Activated T-helper 2 cell treated with anti-CD3 and anti-CD28 coated beads, Interferon-gamma antibody, Interleukin-2, Interleukin-4, amounts not matched to agents 10 μg/mL and 5 μg/mL and 100 μg/mL, durations not matched to agents 14 hours and 24 hours and 36 hours (primary cell): ENCODE measurements at regions of chr5 and their contacts with region 1.

Region 1: GRCh38 chr5:111757355-111758283 is 625 bp upstream of the NREP start:
- DNase-seq: peak; percentile 86
- H3K4me3 Mint-ChIP-seq: peak overlapping the region; percentile 86
- H3K27ac Mint-ChIP-seq: peak overlapping the region; percentile 92
- H3K4me1 Mint-ChIP-seq: peaks cover 31% of the 10 kb centered on the region
- H3K27me3 Mint-ChIP-seq: no peaks in the 10 kb centered on the region

Region 2: GRCh38 chr5:110738812-110739651 is 1018.6 kb before region 1 on chr5 and contains the start of gene SLC25A46:
- intact Hi-C with region 1: loop called (anchors 10 kb)
- DNase-seq: peak; percentile 86
- H3K4me3 Mint-ChIP-seq: peak within 1 kb of the TSS; percentile 97
- H3K27ac Mint-ChIP-seq: peak within 1 kb of the TSS; percentile 92
- H3K4me1 Mint-ChIP-seq: peaks cover 28% of the 10 kb centered on the region
- H3K27me3 Mint-ChIP-seq: peaks cover 11% of the 10 kb centered on the region
- total RNA-seq, gene SLC25A46: 44.0 and 44.8 TPM in 2 replicates

Region 3: GRCh38 chr5:111530298-111530740 is 227.3 kb before region 1 on chr5:
- intact Hi-C with region 1: loop called (anchors 5 kb)
- DNase-seq: peak; percentile 80
- H3K4me3 Mint-ChIP-seq: peak overlapping the region; percentile 46
- H3K27ac Mint-ChIP-seq: peak overlapping the region; percentile 87
- H3K4me1 Mint-ChIP-seq: peaks cover 35% of the 10 kb centered on the region
- H3K27me3 Mint-ChIP-seq: no peaks in the 10 kb centered on the region

Region 4: DNA sequence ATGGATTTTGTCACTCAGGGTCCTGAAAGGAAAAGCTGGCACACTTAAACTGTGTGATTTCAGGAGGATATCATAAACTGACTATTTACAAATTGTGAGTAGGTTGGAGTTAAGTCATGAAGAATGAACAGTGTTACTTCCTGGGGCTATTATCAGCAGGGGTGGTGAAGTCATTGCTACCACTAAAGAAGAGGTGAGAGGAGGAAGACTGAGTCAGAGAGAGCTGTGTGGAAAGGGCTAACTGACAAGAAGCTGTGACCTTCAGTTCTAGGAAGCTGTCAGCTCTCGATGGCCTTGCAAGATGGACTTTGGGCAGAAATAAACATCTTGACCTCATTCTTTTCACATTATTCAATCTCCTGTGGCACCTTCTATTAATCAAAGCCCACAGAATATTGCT is 173.0 kb before region 1 on chr5:
- intact Hi-C with region 1: loop called (anchors 5 kb)
- DNase-seq: no peak
- H3K4me3 Mint-ChIP-seq: no peak overlapping the region
- H3K27ac Mint-ChIP-seq: peak overlapping the region; percentile 77
- H3K4me1 Mint-ChIP-seq: peaks cover 50% of the 10 kb centered on the region
- H3K27me3 Mint-ChIP-seq: no peaks in the 10 kb centered on the region

Region 5: DNA sequence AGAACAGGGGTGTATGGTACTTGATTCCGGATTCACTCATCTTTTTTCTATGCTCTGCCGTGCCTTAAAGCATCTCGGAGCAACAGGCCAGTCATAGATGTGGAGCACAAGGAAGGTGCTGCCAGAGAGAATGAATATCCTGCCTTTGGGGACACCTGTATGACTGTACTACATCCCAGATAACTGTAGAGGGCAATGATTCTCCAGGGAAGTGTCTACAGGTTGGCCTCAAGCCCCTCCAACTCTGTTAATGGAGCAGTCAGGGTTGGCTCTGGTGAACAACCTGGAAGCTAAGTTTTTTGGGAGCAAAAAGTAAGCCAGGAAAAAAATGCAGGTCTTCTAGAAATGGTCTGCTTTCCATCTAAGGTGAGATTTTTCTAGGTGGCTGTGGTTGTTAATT is 71.6 kb before region 1 on chr5:
- intact Hi-C with region 1: no loop called
- DNase-seq: no peak
- H3K4me3 Mint-ChIP-seq: no peak overlapping the region
- H3K27ac Mint-ChIP-seq: no peak overlapping the region
- H3K4me1 Mint-ChIP-seq: no peaks in the 10 kb centered on the region
- H3K27me3 Mint-ChIP-seq: peaks cover 1% of the 10 kb centered on the region

Region 6: GRCh38 chr5:111735583-111736270 is 21.9 kb before region 1 on chr5:
- intact Hi-C with region 1: loop called (anchors 2 kb)
- DNase-seq: no peak
- H3K4me3 Mint-ChIP-seq: no peak overlapping the region
- H3K27ac Mint-ChIP-seq: peak overlapping the region; percentile 0
- H3K4me1 Mint-ChIP-seq: peaks cover 56% of the 10 kb centered on the region
- H3K27me3 Mint-ChIP-seq: no peaks in the 10 kb centered on the region

Region 7: DNA sequence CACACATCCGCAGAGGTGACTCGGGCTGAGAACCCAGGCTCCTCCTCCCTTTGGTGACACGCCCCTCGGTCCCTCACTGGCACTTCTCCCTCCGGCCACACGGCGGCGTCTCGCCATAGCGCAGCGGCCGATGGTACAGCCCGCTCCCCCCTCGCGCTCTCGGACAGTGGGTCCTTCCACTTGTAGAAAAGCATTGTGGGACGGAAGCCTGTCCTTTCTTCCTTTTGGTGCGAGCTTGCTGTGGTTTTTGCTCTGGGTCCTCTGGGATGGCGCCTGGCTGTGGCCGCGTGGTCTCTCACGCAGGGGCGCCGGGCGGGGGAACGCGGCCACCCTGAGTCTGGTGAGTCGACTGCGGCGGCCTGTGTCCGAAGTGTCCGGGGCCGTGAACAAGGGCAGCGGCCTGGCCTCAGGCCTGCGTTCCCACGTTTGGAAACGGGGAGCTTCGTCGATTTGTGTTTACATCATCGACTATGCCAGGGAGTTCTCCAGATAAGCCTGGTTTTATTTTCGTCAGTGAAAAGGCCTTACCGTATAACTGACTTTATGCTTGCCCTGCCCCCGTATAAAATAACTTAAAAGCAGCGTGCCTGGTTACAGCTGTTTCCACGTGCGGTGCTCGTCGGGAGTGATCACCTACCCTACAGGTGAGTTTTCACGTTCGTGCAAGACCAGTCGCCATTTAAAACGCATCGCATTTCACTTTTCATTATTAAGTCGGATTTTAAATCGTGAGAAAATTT is 403.2 kb after region 1 on chr5:
- intact Hi-C with region 1: loop called (anchors 5 kb)
- DNase-seq: peak; percentile 90
- H3K4me3 Mint-ChIP-seq: peak overlapping the region; percentile 90
- H3K27ac Mint-ChIP-seq: peak overlapping the region; percentile 80
- H3K4me1 Mint-ChIP-seq: peaks cover 34% of the 10 kb centered on the region
- H3K27me3 Mint-ChIP-seq: no peaks in the 10 kb centered on the region